Activated CD8-positive, alpha-beta T cell treated with anti-CD3 and anti-CD28 coated beads, Interleukin-2, amount 10 ng/mL, durations not matched to agents 7 days and 5 days (primary cell): ENCODE measurements at regions of chr1 and their contacts with region 1.

Region 1: GRCh38 chr1:92317836-92318493 is 19.1 kb downstream of the RPAP2 start:
- DNase-seq: peak; percentile 60
- ATAC-seq: peak; percentile 76
- H3K4me3 Mint-ChIP-seq: peak overlapping the region; percentile 63
- H3K27ac Mint-ChIP-seq: peak overlapping the region; percentile 84
- H3K4me1 Mint-ChIP-seq: peaks cover 62% of the 10 kb centered on the region
- H3K27me3 Mint-ChIP-seq: no peaks in the 10 kb centered on the region

Region 2: DNA sequence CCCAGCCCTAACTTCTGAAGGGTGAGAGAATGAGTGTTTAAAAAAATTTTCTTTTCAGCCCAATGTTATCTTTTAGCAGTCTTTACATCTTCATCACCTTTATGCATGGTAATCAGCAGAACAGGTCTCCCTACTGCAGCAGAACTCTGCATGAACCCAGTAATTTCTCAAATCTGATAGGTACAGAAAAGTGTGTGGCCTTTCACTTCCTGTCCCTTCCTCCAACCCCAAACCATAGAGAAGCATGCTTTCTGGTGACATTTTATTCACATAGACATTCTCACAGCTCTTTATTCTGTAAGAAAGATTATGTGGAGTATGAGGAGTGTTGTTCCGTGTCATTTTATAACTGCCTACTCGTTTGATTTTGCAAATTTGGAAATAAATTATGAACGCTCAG is 49.5 kb after region 1 on chr1:
- CTCF ChIA-PET with region 1: interaction called, 6 read pairs
- POLR2A ChIA-PET with region 1: interaction called, 12 read pairs
- DNase-seq: peak; percentile 50
- ATAC-seq: peak; percentile 59
- H3K4me3 Mint-ChIP-seq: peak overlapping the region; percentile 11
- H3K27ac Mint-ChIP-seq: peak overlapping the region; percentile 56
- H3K4me1 Mint-ChIP-seq: peaks cover 63% of the 10 kb centered on the region
- H3K27me3 Mint-ChIP-seq: no peaks in the 10 kb centered on the region

Region 3: GRCh38 chr1:92410706-92411105 is 92.7 kb after region 1 on chr1:
- CTCF ChIA-PET with region 1: interaction called, 11 read pairs
- POLR2A ChIA-PET with region 1: interaction called, 3 read pairs
- DNase-seq: peak; percentile 68
- ATAC-seq: peak; percentile 84
- H3K4me3 Mint-ChIP-seq: peak overlapping the region; percentile 54
- H3K27ac Mint-ChIP-seq: peak overlapping the region; percentile 80
- H3K4me1 Mint-ChIP-seq: peaks cover 38% of the 10 kb centered on the region
- H3K27me3 Mint-ChIP-seq: no peaks in the 10 kb centered on the region

Region 4: GRCh38 chr1:92476071-92476631 is 158.2 kb after region 1 on chr1:
- CTCF ChIA-PET with region 1: interaction called, 83 read pairs
- POLR2A ChIA-PET with region 1: interaction called, 7 read pairs
- DNase-seq: peak; percentile 78
- ATAC-seq: peak; percentile 67
- H3K4me3 Mint-ChIP-seq: peak overlapping the region; percentile 16
- H3K27ac Mint-ChIP-seq: peak overlapping the region; percentile 79
- H3K4me1 Mint-ChIP-seq: peaks cover 84% of the 10 kb centered on the region
- H3K27me3 Mint-ChIP-seq: no peaks in the 10 kb centered on the region